ENCODE measurements at regions of chr12 and their contacts with region 1.

Region 1: GRCh38 chr12:57604454-57604991 is at the start of gene DTX3:
- DNase-seq: peak; percentile 52
- H3K4me3 ChIP-seq: peak within 1 kb of the TSS; percentile 92
- H3K27ac ChIP-seq: peak within 1 kb of the TSS; percentile 75
- H3K4me1 ChIP-seq: peaks cover 11% of the 10 kb centered on the region
- H3K27me3 ChIP-seq: no peaks in the 10 kb centered on the region
- CTCF ChIP-seq: no peak
- total RNA-seq, gene DTX3: 61.7 and 65.9 TPM in 2 replicates

Region 2: GRCh38 chr12:57299514-57300016 is 305.0 kb before region 1 on chr12:
- CTCF ChIA-PET with region 1: no interaction called
- POLR2A ChIA-PET with region 1: no interaction called
- intact Hi-C with region 1: no loop called
- DNase-seq: no peak
- H3K4me3 ChIP-seq: no peak overlapping the region
- H3K27ac ChIP-seq: no peak overlapping the region
- H3K4me1 ChIP-seq: no peaks in the 10 kb centered on the region
- H3K27me3 ChIP-seq: no peaks in the 10 kb centered on the region
- CTCF ChIP-seq: no peak

Region 3: GRCh38 chr12:57893431-57894353 is 289.2 kb after region 1 on chr12:
- CTCF ChIA-PET with region 1: no interaction called
- POLR2A ChIA-PET with region 1: interaction called, 10 read pairs
- intact Hi-C with region 1: no loop called
- DNase-seq: peak; percentile 90
- H3K4me3 ChIP-seq: peak overlapping the region; percentile 5
- H3K27ac ChIP-seq: peak overlapping the region; percentile 97
- H3K4me1 ChIP-seq: peaks cover 71% of the 10 kb centered on the region
- H3K27me3 ChIP-seq: no peaks in the 10 kb centered on the region
- CTCF ChIP-seq: no peak

Region 4: DNA sequence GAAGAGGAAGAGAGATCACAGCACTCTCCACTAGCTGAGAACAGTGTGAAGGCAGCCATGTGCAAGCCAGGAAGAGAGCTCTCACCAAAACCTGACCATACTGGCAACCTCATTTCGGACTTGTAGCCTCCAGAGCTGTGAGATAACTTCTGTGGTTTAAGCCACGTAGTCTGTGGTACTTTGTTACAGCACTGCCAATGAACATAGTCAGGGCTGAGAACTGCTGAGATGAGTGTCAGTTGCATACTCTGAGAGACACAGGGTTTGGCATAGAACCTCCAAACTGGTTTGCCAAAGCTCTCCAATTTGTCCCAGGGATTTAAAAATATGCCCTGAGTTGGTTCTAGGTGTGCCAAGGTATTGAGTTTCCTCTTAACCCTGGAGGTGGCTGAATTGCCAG is 555.4 kb after region 1 on chr12:
- CTCF ChIA-PET with region 1: no interaction called
- POLR2A ChIA-PET with region 1: no interaction called
- intact Hi-C with region 1: no loop called
- DNase-seq: no peak
- H3K4me3 ChIP-seq: no peak overlapping the region
- H3K27ac ChIP-seq: no peak overlapping the region
- H3K4me1 ChIP-seq: no peaks in the 10 kb centered on the region
- H3K27me3 ChIP-seq: no peaks in the 10 kb centered on the region
- CTCF ChIP-seq: no peak